Activated B cell treated with CpG ODN at 0.5 μM for 24 hours (primary cell): ENCODE measurements at regions of chr13 and their contacts with region 1.

Region 1: GRCh38 chr13:79541426-79542049 is 60.6 kb downstream of the NDFIP2 start:
- DNase-seq: no peak
- ATAC-seq: peak; percentile 62
- H3K4me3 Mint-ChIP-seq: no peak overlapping the region
- H3K27ac Mint-ChIP-seq: no peak overlapping the region
- H3K4me1 Mint-ChIP-seq: no peaks in the 10 kb centered on the region
- H3K27me3 Mint-ChIP-seq: no peaks in the 10 kb centered on the region
- CTCF ChIP-seq: peak; percentile 32

Region 2: DNA sequence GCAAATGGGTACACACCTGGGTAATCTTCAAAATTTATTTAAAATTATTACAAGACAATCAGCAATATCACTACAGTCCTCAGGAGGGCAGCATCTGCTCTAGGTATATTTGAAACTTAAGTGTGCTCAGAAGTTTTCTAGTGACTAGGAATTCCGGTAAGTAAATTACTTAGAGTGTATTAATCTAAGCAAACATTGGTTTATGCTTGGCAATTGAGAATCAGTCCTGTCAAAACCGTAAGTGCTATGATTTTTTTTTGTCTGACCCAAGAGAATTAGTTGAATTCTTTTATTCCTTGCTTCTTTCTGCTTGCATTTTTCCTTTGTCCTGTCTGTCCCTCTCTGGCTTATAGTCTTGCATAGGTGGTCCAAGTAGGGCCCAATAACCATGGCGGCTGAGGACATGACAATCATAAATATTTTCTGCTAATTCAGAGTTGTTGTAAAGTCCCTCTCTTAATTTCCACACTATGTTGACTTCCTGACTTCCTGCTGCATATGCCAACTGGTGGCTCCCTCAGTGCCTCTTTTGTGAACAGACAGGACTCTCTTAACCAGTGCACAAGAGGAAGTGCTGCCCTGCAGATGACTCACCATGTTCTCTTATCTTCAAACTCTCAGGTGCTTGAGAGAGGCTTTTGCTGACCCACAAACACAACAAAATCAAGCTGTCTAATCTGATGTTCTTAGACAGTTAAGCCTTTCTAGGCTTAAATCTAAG is 1761.8 kb before region 1 on chr13:
- CTCF ChIA-PET with region 1: no interaction called
- POLR2A ChIA-PET with region 1: no interaction called
- intact Hi-C with region 1: loop called (anchors 1 kb)
- DNase-seq: no peak
- ATAC-seq: peak; percentile 60
- H3K4me3 Mint-ChIP-seq: no peak overlapping the region
- H3K27ac Mint-ChIP-seq: no peak overlapping the region
- H3K4me1 Mint-ChIP-seq: peaks cover 6% of the 10 kb centered on the region
- H3K27me3 Mint-ChIP-seq: no peaks in the 10 kb centered on the region
- CTCF ChIP-seq: peak; percentile 37

Region 3: DNA sequence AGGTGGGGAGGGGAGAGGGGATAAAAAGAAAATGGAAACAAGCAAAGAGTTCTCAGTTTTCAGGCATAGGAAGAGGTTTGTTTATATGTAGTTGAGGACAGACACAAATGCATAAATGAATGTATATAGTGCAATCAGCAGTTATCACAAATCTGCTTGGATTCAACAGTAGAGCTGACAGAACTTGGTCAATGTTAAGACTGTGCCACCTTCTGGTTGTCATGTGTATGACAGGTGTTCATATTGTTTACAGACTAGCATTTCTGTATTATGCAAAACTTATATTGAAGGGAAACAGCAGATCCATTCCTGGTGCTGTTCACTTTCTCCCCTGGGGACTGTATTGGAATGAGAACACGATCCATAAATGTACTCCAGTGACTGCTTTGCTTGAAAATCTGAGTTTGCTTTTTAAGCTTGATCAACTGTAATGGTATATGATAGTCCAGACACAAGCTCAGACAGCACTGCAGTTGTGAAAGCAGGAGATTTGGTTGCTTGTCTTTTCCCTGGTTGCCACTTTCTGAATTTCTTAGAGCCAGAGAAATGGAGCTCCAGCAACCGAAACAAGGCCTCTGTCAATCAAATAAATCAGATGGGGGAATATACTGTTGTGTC is 563.0 kb before region 1 on chr13:
- CTCF ChIA-PET with region 1: interaction called, 3 read pairs
- POLR2A ChIA-PET with region 1: no interaction called
- intact Hi-C with region 1: loop called (anchors 10 kb)
- DNase-seq: no peak
- ATAC-seq: peak; percentile 77
- H3K4me3 Mint-ChIP-seq: no peak overlapping the region
- H3K27ac Mint-ChIP-seq: no peak overlapping the region
- H3K4me1 Mint-ChIP-seq: no peaks in the 10 kb centered on the region
- H3K27me3 Mint-ChIP-seq: peaks cover 15% of the 10 kb centered on the region
- CTCF ChIP-seq: peak; percentile 93

Region 4: GRCh38 chr13:79423801-79424642 is 117.5 kb before region 1 on chr13:
- CTCF ChIA-PET with region 1: interaction called, 235 read pairs
- POLR2A ChIA-PET with region 1: no interaction called
- intact Hi-C with region 1: loop called (anchors 1 kb)
- DNase-seq: no peak
- ATAC-seq: peak; percentile 52
- H3K4me3 Mint-ChIP-seq: no peak overlapping the region
- H3K27ac Mint-ChIP-seq: no peak overlapping the region
- H3K4me1 Mint-ChIP-seq: no peaks in the 10 kb centered on the region
- H3K27me3 Mint-ChIP-seq: no peaks in the 10 kb centered on the region
- CTCF ChIP-seq: no peak

Region 5: DNA sequence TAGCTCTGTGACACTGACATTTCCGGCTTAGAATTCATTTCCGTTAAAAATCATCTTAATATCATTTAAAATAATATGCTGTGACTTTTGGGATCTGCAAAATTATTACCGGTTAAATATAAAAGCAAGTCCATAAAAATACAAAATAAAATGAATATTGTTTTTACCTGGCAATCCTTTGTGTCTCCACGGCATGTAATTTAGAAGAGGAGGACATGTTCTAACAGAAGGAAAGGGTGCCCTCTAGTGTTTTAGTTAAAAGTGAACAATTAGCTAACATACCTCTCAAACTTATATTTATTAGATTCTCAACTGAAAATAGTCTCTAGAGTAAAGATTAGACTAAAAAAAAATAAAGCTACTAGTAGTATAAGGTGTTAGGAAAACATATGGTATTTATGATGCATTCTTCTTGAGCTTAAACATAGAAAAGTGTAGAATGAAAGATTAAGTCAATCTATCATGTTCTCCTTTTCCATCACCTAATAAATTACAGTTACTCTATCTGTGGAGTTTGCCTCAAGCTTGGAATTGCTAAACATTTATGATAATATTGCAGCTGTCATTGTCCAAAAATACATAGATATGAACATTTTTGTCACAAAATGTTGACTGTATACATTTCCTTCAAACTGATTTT is 1476.1 kb after region 1 on chr13:
- CTCF ChIA-PET with region 1: no interaction called
- POLR2A ChIA-PET with region 1: no interaction called
- intact Hi-C with region 1: loop called (anchors 10 kb)
- DNase-seq: no peak
- ATAC-seq: no peak
- H3K4me3 Mint-ChIP-seq: no peak overlapping the region
- H3K27ac Mint-ChIP-seq: no peak overlapping the region
- H3K4me1 Mint-ChIP-seq: no peaks in the 10 kb centered on the region
- H3K27me3 Mint-ChIP-seq: no peaks in the 10 kb centered on the region
- CTCF ChIP-seq: no peak